ENCODE measurements at regions of chr1 and their contacts with region 1.

Region 1: DNA sequence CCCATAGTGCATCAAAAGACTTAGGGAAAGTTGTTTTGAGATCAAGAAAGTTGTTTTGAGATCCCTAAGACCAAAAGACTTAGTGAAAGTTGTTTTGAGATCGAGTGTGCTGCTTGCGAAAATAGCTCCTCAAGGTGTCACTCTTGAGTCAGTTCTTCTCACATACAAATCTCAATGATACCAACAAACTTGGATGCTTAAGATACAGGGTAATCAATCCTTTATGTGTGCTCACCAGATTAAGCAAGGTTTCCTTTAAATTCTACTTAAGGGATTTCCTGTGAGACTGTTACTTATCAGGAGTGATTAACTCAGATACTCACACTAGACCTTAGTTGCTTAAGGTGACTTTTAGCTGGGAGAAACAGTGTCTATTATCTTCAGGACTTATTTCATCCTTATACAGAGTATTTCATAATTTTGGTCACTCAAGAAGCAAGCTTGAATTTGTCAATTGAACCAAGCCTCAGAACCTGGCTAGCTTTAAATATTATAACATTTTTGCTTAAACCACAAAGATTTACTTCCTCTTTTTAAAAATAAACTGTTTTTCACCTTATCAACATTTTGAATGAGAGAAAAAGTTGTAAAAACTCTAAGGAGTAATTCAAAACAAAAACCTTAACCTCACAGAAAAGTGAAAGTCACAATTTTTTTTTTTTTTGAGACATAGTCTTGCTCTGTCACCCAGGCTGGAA is 8.0 kb upstream of the RLF start:
- DNase-seq: peak; percentile 61
- H3K4me3 Mint-ChIP-seq: no peak overlapping the region
- H3K27ac Mint-ChIP-seq: no peak overlapping the region
- H3K4me1 Mint-ChIP-seq: peaks cover 8% of the 10 kb centered on the region
- H3K27me3 Mint-ChIP-seq: peaks cover 13% of the 10 kb centered on the region
- CTCF ChIP-seq: peak; percentile 57

Region 2: DNA sequence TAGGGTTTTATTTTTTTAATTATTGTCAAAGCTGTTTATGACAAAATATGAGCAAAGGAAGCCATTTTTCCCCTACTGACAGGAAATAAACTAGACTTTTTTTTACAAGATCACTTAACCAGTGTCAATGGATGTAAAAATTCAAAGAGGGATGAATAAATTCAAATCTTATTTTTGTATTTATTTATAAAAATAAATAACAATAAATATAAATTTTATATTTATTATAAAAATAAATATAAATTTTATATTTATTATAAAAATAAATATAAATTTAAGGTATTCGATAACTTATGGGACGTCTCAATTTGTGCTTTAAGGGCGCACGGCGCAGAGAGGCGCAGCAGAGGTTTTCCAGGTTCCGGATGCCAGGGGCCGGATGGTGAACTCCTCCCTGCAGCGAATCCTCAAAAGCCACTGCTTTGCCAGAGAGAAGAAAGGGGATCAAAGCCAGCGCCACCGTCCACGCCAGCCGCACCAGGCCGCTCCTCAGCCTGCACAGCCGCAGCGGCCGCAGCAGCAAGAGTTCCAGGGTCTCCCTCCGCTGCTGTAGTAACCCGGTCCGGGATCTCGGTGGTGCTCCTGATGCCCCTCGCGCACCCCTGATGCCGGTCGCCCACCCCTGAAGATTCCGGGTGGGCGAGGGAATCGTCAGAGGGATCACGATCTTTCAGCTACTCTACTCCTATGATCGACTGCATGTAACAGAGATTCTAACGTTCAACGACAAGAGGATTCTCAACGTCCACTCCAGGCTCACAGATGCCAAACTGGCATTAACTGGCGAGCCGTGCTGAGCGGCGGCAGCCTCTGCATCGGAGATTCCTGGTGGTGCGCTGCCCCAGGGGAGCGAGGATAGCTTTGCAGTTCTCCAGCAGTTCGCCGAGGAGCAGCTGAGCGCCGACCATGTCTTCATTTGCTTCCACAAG is 20.6 kb before region 1 on chr1:
- CTCF ChIA-PET with region 1: interaction called, 26 read pairs
- POLR2A ChIA-PET with region 1: interaction called, 6 read pairs
- intact Hi-C with region 1: no loop called
- DNase-seq: no peak
- H3K4me3 Mint-ChIP-seq: no peak overlapping the region
- H3K27ac Mint-ChIP-seq: no peak overlapping the region
- H3K4me1 Mint-ChIP-seq: no peaks in the 10 kb centered on the region
- H3K27me3 Mint-ChIP-seq: peaks cover 24% of the 10 kb centered on the region
- CTCF ChIP-seq: no peak

Region 3: GRCh38 chr1:40232444-40232843 is 79.2 kb after region 1 on chr1:
- CTCF ChIA-PET with region 1: interaction called, 10 read pairs
- POLR2A ChIA-PET with region 1: interaction called, 3 read pairs
- intact Hi-C with region 1: no loop called
- DNase-seq: no peak
- H3K4me3 Mint-ChIP-seq: no peak overlapping the region
- H3K27ac Mint-ChIP-seq: no peak overlapping the region
- H3K4me1 Mint-ChIP-seq: no peaks in the 10 kb centered on the region
- H3K27me3 Mint-ChIP-seq: no peaks in the 10 kb centered on the region
- CTCF ChIP-seq: no peak

Region 4: DNA sequence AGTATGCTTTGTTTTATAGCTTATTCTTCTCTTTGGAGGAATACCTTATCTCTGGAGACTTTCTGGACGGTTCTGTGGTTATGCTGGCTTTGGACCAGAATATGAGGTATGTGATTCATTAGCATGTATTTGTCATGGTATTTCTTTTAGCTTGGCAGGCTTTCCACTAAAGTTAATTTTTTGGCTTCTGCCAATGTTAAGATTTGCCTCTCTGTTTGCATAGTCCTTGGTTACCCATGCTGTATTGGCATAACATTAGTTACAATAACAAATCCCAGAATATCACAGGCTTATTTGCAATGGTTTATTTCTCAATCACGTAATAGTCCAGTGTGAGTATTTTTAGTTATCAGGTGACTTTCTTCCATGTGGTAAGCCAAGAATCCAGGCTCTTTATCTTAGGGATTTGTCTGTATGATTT is 114.6 kb after region 1 on chr1:
- CTCF ChIA-PET with region 1: interaction called, 14 read pairs
- POLR2A ChIA-PET with region 1: no interaction called
- intact Hi-C with region 1: no loop called
- DNase-seq: peak; percentile 73
- H3K4me3 Mint-ChIP-seq: no peak overlapping the region
- H3K27ac Mint-ChIP-seq: peak overlapping the region; percentile 75
- H3K4me1 Mint-ChIP-seq: peaks cover 12% of the 10 kb centered on the region
- H3K27me3 Mint-ChIP-seq: no peaks in the 10 kb centered on the region
- CTCF ChIP-seq: no peak

Region 5: GRCh38 chr1:40404670-40405462 is 251.6 kb after region 1 on chr1:
- CTCF ChIA-PET with region 1: interaction called, 28 read pairs
- POLR2A ChIA-PET with region 1: interaction called, 3 read pairs
- intact Hi-C with region 1: loop called (anchors 1 kb)
- DNase-seq: peak; percentile 70
- H3K4me3 Mint-ChIP-seq: no peak overlapping the region
- H3K27ac Mint-ChIP-seq: no peak overlapping the region
- H3K4me1 Mint-ChIP-seq: peaks cover 4% of the 10 kb centered on the region
- H3K27me3 Mint-ChIP-seq: no peaks in the 10 kb centered on the region
- CTCF ChIP-seq: peak; percentile 63

Region 6: GRCh38 chr1:40610156-40610555 is 456.9 kb after region 1 on chr1:
- CTCF ChIA-PET with region 1: no interaction called
- POLR2A ChIA-PET with region 1: no interaction called
- intact Hi-C with region 1: no loop called
- DNase-seq: no peak
- H3K4me3 Mint-ChIP-seq: no peak overlapping the region
- H3K27ac Mint-ChIP-seq: no peak overlapping the region
- H3K4me1 Mint-ChIP-seq: peaks cover 12% of the 10 kb centered on the region
- H3K27me3 Mint-ChIP-seq: no peaks in the 10 kb centered on the region
- CTCF ChIP-seq: no peak

Region 7: GRCh38 chr1:40849801-40850592 is 696.8 kb after region 1 on chr1:
- CTCF ChIA-PET with region 1: no interaction called
- POLR2A ChIA-PET with region 1: no interaction called
- intact Hi-C with region 1: no loop called
- DNase-seq: peak; percentile 75
- H3K4me3 Mint-ChIP-seq: no peak overlapping the region
- H3K27ac Mint-ChIP-seq: no peak overlapping the region
- H3K4me1 Mint-ChIP-seq: peaks cover 6% of the 10 kb centered on the region
- H3K27me3 Mint-ChIP-seq: no peaks in the 10 kb centered on the region
- CTCF ChIP-seq: peak; percentile 84

Measured in MCF 10A (cell line).